IMR-90 (cell line): ENCODE measurements at regions of chr16 and their contacts with region 1.

Region 1: GRCh38 chr16:29862884-29863668 is at the start of gene CDIPT:
- DNase-seq: peak; percentile 97
- ATAC-seq: peak; percentile 98
- H3K4me3 ChIP-seq: peak within 1 kb of the TSS; percentile 77
- H3K27ac ChIP-seq: peak within 1 kb of the TSS; percentile 86
- H3K4me1 ChIP-seq: peaks cover 3% of the 10 kb centered on the region; the same call in 1 of the 2 replicates
- H3K27me3 ChIP-seq: no peaks in the 10 kb centered on the region
- CTCF ChIP-seq: peak; percentile 82
- POLR2A ChIP-seq: no peak
- RAD21 ChIP-seq: peak; percentile 33
- total RNA-seq, gene CDIPT: 47.1 and 48.3 TPM in 2 replicates

Region 2: GRCh38 chr16:29738514-29738913 is 124.6 kb before region 1 on chr16:
- CTCF ChIA-PET with region 1: no interaction called
- POLR2A ChIA-PET with region 1: no interaction called
- dilution Hi-C with region 1: no loop called
- in situ Hi-C with region 1: no loop called
- intact Hi-C with region 1: no loop called
- DNase-seq: no peak
- ATAC-seq: no peak
- H3K4me3 ChIP-seq: no peak overlapping the region
- H3K27ac ChIP-seq: no peak overlapping the region
- H3K4me1 ChIP-seq: no peaks in the 10 kb centered on the region
- H3K27me3 ChIP-seq: peaks cover 31% of the 10 kb centered on the region
- CTCF ChIP-seq: no peak
- POLR2A ChIP-seq: no peak
- RAD21 ChIP-seq: no peak

Region 3: DNA sequence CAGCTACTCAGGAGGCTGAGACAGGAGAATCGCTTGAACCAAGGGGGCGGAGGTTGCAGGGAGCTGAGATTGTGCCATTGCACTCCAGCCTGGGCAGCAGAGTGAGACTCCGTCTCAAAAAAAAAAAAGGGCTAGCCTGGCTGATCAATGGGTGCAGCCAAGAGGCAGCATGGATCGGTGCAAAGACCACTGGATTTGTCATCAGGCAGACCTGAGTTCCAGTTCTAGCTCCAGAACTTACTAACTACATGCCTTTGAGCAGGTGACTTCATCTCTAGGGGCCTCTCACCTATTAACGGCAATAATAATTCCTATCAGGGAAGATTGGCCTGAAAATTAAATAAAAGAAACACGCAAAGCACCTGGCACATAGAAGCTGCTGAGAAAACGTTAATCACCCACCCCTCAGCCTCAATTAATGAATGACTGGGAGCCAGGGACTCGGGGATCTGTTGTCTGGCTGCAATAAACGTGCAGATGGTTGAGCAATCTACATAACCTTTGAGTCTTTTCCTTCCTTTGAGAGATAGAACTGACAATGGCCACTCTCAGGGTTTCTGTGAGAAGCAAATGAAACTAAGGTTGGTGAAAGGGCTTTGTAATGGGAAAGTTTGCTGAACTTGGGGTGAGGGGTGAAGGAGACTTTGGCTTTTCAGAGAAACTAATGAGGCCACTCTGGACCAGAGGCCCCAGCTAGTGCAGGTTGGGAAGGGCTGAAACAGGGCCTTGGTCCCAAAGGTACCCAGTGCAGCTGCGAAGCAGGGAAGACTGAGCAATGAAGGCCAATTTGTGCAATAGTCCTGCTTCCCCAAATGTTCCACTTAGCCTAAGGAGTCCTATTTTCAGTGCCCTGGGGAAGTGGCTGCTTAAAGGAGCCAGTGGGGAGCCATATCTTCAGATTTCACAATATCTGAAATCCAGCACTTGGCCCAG is 28.7 kb after region 1 on chr16:
- CTCF ChIA-PET with region 1: no interaction called
- POLR2A ChIA-PET with region 1: no interaction called
- dilution Hi-C with region 1: no loop called
- in situ Hi-C with region 1: no loop called
- intact Hi-C with region 1: loop called (anchors 2 kb)
- DNase-seq: no peak
- ATAC-seq: no peak
- H3K4me3 ChIP-seq: no peak overlapping the region
- H3K27ac ChIP-seq: no peak overlapping the region
- H3K4me1 ChIP-seq: no peaks in the 10 kb centered on the region
- H3K27me3 ChIP-seq: no peaks in the 10 kb centered on the region
- CTCF ChIP-seq: no peak
- POLR2A ChIP-seq: no peak
- RAD21 ChIP-seq: no peak

Region 4: GRCh38 chr16:29906520-29907244 is 43.6 kb after region 1 on chr16:
- CTCF ChIA-PET with region 1: no interaction called
- POLR2A ChIA-PET with region 1: no interaction called
- dilution Hi-C with region 1: no loop called
- in situ Hi-C with region 1: no loop called
- intact Hi-C with region 1: no loop called
- DNase-seq: no peak
- ATAC-seq: no peak
- H3K4me3 ChIP-seq: no peak overlapping the region
- H3K27ac ChIP-seq: no peak overlapping the region
- H3K4me1 ChIP-seq: peaks cover 3% of the 10 kb centered on the region
- H3K27me3 ChIP-seq: no peaks in the 10 kb centered on the region
- CTCF ChIP-seq: no peak
- POLR2A ChIP-seq: no peak
- RAD21 ChIP-seq: no peak

Region 5: DNA sequence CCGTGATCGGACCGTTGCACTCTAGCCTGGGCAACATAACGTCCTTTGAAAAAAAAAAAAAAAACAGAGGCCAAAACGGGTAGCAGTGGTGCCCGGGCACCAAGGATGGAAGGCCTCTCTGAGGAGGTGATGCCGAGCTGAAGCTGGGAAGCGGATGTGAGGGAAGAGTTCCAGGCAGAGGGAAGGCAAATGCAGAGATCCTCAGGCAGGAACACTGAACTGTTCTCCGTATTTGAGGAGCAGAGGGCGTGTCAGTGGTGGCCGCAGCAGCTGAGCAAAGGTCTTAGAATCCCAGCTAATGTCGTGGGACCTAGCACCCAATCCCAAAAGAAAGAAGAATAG is 63.6 kb after region 1 on chr16:
- CTCF ChIA-PET with region 1: no interaction called
- POLR2A ChIA-PET with region 1: no interaction called
- dilution Hi-C with region 1: no loop called
- in situ Hi-C with region 1: no loop called
- intact Hi-C with region 1: no loop called
- DNase-seq: peak; percentile 23
- ATAC-seq: peak; percentile 10
- H3K4me3 ChIP-seq: peak overlapping the region; percentile 79
- H3K27ac ChIP-seq: peak overlapping the region; percentile 92
- H3K4me1 ChIP-seq: peaks cover 10% of the 10 kb centered on the region
- H3K27me3 ChIP-seq: no peaks in the 10 kb centered on the region
- CTCF ChIP-seq: no peak
- POLR2A ChIP-seq: no peak
- RAD21 ChIP-seq: no peak

Region 6: GRCh38 chr16:29995911-29996772 is 133.1 kb after region 1 on chr16 and contains the start of gene INO80E:
- CTCF ChIA-PET with region 1: interaction called, 3 read pairs
- POLR2A ChIA-PET with region 1: no interaction called
- dilution Hi-C with region 1: no loop called
- in situ Hi-C with region 1: no loop called
- intact Hi-C with region 1: loop called (anchors 2 kb)
- DNase-seq: peak; percentile 93
- ATAC-seq: peak; percentile 98
- H3K4me3 ChIP-seq: peak within 1 kb of the TSS; percentile 65
- H3K27ac ChIP-seq: peak within 1 kb of the TSS; percentile 79
- H3K4me1 ChIP-seq: peaks cover 8% of the 10 kb centered on the region
- H3K27me3 ChIP-seq: no peaks in the 10 kb centered on the region
- CTCF ChIP-seq: no peak
- POLR2A ChIP-seq: peak; percentile 69
- RAD21 ChIP-seq: peak; percentile 1; the same call in 1 of the 2 replicates
- total RNA-seq, gene INO80E: 42.1 and 42.8 TPM in 2 replicates

Region 7: GRCh38 chr16:30896889-30897733 is 1034.0 kb after region 1 on chr16:
- CTCF ChIA-PET with region 1: no interaction called
- POLR2A ChIA-PET with region 1: no interaction called
- dilution Hi-C with region 1: no loop called
- in situ Hi-C with region 1: no loop called
- intact Hi-C with region 1: no loop called
- DNase-seq: peak; percentile 87
- ATAC-seq: peak; percentile 41
- H3K4me3 ChIP-seq: peak overlapping the region; percentile 62
- H3K27ac ChIP-seq: peak overlapping the region; percentile 99
- H3K4me1 ChIP-seq: peaks cover 25% of the 10 kb centered on the region
- H3K27me3 ChIP-seq: no peaks in the 10 kb centered on the region
- CTCF ChIP-seq: no peak
- POLR2A ChIP-seq: no peak
- RAD21 ChIP-seq: no peak